OCI-LY7 (cell line): ENCODE measurements at regions of chr1 and their contacts with region 1.

Region 1: DNA sequence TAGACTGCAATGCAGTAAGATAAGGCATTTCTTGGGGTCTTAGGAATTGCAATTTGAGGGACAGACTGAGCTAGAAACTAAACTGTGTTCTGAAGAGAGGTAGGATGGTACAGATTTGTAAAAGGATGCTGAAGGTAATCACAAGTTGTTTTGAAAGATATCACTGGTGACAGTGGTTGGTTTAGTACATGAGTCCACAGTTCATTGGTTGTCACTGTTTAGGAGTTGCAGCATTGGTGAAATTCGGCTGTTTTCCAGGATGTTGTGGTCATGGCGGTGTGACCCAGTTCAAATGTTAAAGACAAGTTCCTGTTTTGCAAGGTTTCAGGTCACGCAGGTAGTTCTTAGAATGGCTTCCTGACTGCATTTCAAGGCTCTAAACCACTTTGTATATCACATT is 292.8 kb upstream of the B3GALT2 start:
- DNase-seq: peak; percentile 87
- H3K4me3 ChIP-seq: no peak overlapping the region
- H3K27ac ChIP-seq: no peak overlapping the region
- H3K4me1 ChIP-seq: peaks cover 19% of the 10 kb centered on the region
- CTCF ChIP-seq: no peak

Region 2: GRCh38 chr1:193448682-193449461 is 30.3 kb before region 1 on chr1:
- CTCF ChIA-PET with region 1: no interaction called
- POLR2A ChIA-PET with region 1: interaction called, 5 read pairs
- intact Hi-C with region 1: loop called (anchors 2 kb)
- DNase-seq: peak; percentile 84
- H3K4me3 ChIP-seq: peak overlapping the region; percentile 46
- H3K27ac ChIP-seq: peak overlapping the region; percentile 90
- H3K4me1 ChIP-seq: peaks cover 36% of the 10 kb centered on the region
- CTCF ChIP-seq: no peak

Region 3: DNA sequence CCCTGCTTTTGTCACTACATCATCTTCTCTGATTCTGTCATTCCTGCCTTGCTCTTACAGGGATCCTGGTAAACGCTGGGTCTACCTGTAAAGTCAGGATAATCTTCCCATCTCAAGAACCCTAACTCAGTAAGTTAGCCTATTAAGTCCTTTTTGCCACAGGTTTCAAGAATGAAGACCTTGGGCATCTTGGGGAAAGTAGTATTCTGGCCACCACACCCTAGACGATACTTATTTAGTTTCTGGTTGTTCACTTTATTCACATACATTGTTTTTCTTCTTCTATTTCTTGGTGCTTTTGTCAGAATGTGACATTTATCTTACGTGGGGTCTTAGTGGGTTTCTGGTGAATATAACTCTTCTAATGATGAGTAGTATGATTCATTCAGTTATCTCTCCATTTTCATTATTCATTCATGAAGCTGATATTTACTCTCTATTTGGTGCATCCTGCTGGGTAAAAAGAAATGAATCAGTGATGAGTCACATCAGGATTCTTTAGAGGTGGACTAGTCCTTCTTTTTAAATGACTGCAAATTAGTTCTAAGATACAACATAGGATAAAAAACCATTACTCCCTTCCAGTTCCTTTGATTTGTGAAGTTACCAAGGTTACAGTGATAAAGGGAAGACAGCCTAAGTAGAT is 221.6 kb after region 1 on chr1:
- CTCF ChIA-PET with region 1: no interaction called
- POLR2A ChIA-PET with region 1: no interaction called
- intact Hi-C with region 1: no loop called
- DNase-seq: no peak
- H3K4me3 ChIP-seq: no peak overlapping the region
- H3K27ac ChIP-seq: no peak overlapping the region
- H3K4me1 ChIP-seq: no peaks in the 10 kb centered on the region
- CTCF ChIP-seq: no peak